ENCODE measurements at regions of chr5 and their contacts with region 1.

Region 1: GRCh38 chr5:149422366-149423048 is 43.4 kb upstream of the IL17B start:
- DNase-seq: peak; percentile 82
- ATAC-seq: peak; percentile 67

Region 2: DNA sequence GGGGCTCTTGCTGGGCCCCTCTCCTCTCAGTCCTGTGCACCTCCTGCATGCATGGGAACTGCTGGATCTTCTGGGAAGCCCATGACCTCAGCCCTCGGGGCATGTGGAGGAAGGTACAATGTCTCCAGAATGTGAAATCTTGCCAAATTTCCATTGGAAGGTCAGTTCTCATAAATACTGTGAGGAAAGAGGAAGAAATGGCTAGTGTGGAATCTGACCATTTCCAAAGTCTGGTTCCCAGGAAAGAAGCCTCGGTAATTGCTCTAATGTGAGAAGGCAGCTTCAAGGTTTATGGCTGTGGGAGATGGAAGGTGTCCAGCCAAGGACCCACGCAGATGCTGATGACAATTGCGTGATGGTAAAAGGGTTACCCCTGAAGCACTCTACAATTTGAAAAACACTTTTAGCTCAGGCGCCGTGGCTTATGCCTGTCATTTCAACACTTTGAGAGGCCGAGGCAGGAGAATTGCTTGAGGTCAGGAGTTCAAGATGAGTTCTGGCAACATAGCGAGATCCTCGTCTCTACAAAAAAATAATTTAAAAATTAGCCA is 35.4 kb before region 1 on chr5:
- intact Hi-C with region 1: loop called (anchors 5 kb)
- DNase-seq: no peak
- ATAC-seq: peak; percentile 3